GM10248 (cell line): ENCODE measurements at regions of chr14 and their contacts with region 1.

Region 1: DNA sequence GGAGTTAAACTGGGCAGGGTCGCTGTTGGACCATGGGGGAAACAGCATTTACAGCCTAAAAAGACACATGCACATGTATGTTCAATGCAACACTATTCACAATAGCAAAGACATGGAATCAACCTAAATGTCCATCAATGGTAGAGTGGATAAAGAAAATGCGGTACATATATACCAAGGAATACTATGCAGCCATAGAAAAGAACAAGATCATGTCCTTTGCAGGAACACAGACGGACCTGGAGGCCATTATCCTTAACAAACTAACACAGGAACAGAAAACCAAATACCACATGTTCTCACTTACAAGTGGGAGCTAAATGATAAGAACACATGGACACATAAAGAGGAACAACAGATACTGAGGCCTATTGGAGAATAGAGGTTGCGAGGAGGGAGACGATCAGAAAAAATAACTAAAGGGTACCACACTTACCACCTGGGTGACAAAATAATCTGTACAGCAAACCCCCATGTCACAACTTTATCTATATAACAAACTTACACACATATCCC is 25.0 kb upstream of the SRP54 start:
- DNase-seq: no peak
- CTCF ChIP-seq: no peak

Region 2: GRCh38 chr14:34593740-34594375 is 364.0 kb before region 1 on chr14:
- CTCF ChIA-PET with region 1: no interaction called
- POLR2A ChIA-PET with region 1: no interaction called
- DNase-seq: no peak
- CTCF ChIP-seq: no peak

Region 3: GRCh38 chr14:34920339-34920738 is 37.5 kb before region 1 on chr14:
- CTCF ChIA-PET with region 1: no interaction called
- POLR2A ChIA-PET with region 1: no interaction called
- DNase-seq: no peak
- CTCF ChIP-seq: no peak

Region 4: GRCh38 chr14:34944744-34945143 is 13.1 kb before region 1 on chr14:
- CTCF ChIA-PET with region 1: interaction called, 19 read pairs
- POLR2A ChIA-PET with region 1: no interaction called
- DNase-seq: no peak
- CTCF ChIP-seq: no peak